H1 (cell line): ENCODE measurements at regions of chr1 and their contacts with region 1.

Region 1: DNA sequence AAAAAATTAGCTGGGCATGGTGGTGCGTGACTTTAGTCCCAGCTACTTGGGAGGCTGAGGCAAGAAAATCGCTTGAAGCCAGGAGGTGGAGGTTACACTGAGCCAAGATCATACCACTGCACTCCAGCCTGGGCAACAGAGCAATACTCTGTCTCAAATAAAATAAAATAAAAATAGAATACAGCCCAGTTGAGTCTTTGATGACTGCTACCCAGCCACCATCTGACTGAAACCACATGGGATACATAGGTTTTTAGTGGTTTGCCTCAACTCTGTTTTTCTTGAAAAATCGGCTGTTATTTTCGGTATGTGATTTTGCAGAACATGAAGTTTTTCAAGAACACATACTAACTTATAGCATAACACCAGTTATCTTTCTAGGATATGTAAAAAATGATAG is 46.5 kb downstream of the EPRS1 start:
- DNase-seq: no peak
- H3K4me3 ChIP-seq: no peak overlapping the region
- H3K27ac ChIP-seq: no peak overlapping the region
- H3K4me1 ChIP-seq: no peaks in the 10 kb centered on the region
- H3K27me3 ChIP-seq: no peaks in the 10 kb centered on the region
- CTCF ChIP-seq: no peak
- EP300 ChIP-seq: no peak
- POLR2A ChIP-seq: no peak
- RAD21 ChIP-seq: no peak

Region 2: DNA sequence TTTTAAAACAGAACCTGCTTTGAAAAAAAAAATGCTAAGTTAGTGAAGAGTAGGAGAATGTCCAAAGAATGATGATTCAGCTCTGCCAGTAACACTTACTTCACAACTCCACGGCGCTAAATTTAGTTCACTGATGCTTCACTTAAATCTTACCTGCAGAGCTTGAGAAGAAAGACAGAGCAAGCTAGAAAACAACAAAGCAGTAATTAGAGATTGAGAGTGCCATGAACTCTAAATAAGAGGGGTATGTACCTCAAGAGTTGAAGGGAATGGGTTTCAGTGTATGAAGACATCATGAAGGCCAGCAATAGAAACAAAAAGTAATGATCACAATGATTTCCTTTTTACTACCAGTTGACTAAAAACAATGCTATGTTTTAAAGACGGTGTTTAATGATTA is 13.7 kb after region 1 on chr1:
- CTCF ChIA-PET with region 1: interaction called, 17 read pairs
- POLR2A ChIA-PET with region 1: no interaction called
- DNase-seq: no peak
- H3K4me3 ChIP-seq: no peak overlapping the region
- H3K27ac ChIP-seq: no peak overlapping the region
- H3K4me1 ChIP-seq: no peaks in the 10 kb centered on the region
- H3K27me3 ChIP-seq: no peaks in the 10 kb centered on the region
- CTCF ChIP-seq: no peak
- EP300 ChIP-seq: no peak
- POLR2A ChIP-seq: no peak
- RAD21 ChIP-seq: no peak

Region 3: GRCh38 chr1:220028346-220028895 is 28.6 kb after region 1 on chr1:
- CTCF ChIA-PET with region 1: no interaction called
- POLR2A ChIA-PET with region 1: no interaction called
- DNase-seq: no peak
- H3K4me3 ChIP-seq: no peak overlapping the region
- H3K27ac ChIP-seq: no peak overlapping the region
- H3K4me1 ChIP-seq: no peaks in the 10 kb centered on the region
- H3K27me3 ChIP-seq: no peaks in the 10 kb centered on the region
- CTCF ChIP-seq: no peak
- EP300 ChIP-seq: no peak
- POLR2A ChIP-seq: no peak
- RAD21 ChIP-seq: no peak